Left ventricle myocardium superior (tissue), 1 donor: ENCODE measurements at regions of chrX and their contacts with region 1.

Region 1: DNA sequence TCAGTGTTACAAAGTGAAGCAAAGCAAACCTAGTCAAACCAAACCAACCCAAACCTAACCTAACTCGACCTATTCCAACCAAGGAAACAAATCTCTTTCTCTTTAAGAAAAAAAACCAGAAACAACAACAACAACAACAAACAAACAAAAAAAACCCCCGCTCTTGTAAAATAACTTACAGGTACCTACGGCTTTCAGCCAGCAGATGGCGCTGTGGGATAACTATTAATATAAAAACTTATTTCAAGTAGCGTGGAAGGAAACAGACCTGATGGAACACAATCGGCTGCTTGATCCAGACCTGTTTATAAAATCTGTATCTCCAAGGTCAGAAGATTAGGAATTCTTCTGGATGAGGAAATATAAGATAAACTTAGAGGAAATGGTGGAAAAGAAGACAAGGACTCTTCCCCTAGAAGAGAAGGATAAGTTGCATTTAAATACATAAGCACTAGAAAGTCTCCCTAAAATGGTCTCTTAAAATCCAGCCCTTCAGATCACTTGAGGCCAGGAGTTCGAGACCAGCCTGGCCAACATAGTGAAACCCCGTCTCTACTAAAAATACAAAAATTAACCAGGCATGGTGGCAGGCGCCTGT is 34.4 kb upstream of the CDKL5 start:
- DNase-seq: peak; percentile 73
- ATAC-seq: no peak

Region 2: DNA sequence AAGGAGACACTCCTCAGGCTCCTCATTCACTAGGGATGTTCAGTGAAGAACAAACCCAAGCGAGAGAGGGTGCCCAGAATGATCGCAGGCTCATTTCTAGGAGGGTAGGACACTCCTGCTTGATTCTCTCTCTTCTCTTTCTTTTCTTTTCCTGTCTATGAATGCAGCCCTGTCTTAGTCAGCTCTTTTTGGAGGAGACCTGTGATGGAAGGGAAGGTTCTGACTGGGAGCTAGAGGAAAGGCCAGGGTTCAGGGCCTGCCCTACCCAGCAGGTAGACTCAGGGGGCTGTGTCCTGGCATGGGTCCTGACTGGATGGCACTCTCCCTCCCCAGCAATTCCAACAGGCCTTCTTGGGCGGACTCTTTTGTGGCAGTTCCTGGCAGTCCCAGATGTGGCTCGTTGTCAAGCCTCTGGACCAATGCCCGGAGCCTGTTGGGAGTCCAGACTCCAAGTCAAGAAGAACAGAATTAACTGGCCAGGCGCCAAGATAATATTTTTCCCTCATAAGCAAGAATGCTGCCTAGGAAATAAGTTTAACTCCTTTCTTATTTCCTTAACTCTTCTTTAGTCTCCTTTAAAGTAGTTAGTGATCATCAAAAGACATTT is 793.1 kb before region 1 on chrX:
- intact Hi-C with region 1: no loop called
- DNase-seq: peak; percentile 83
- ATAC-seq: peak; percentile 86

Region 3: GRCh38 chrX:18272222-18272621 is 118.8 kb before region 1 on chrX:
- intact Hi-C with region 1: no loop called
- DNase-seq: no peak
- ATAC-seq: no peak

Region 4: DNA sequence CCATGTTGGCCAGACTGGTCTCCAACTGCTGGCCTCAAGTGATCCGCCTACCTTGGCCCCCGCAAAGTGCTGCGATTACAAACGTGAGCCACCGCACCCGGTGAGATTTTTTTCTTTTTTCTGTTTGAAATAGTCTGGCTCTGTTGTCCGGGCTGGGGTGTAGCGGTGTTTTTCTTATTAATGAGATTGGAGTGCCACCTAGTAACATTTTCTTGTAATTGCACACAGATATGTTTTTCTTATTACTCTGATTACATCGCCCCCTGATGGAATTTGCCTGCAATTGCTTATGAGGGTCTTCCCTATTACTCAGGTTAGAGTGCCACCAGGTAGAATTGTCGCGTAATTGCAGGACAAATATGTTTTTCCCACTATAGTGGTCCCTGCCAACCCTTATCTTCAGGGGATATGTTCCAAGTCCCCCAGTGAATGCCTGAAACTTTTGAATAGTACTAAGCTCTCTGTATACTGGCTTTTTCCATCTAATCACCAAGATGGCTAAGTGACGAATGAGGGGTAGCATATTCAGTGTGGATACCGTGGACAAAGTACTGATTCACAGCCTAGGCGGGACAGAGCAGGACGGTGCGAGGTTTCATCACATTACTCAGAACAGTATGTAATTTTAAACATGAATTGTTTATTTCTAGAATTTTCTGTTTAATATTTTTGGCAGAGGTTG is 944.0 kb after region 1 on chrX:
- intact Hi-C with region 1: loop called (anchors 10 kb)
- DNase-seq: no peak
- ATAC-seq: no peak